Colonic mucosa (tissue), 4 donors: ENCODE measurements at regions of chr5 and their contacts with region 1.

Region 1: GRCh38 chr5:3531320-3531986 is 64.2 kb upstream of the IRX1 start:
- DNase-seq: no peak
- H3K4me3 ChIP-seq: no peak overlapping the region
- H3K27ac ChIP-seq: no peak overlapping the region
- H3K4me1 ChIP-seq: no peaks in the 10 kb centered on the region
- H3K27me3 ChIP-seq: no peaks in the 10 kb centered on the region
- CTCF ChIP-seq: no peak

Region 2: GRCh38 chr5:3010301-3010952 is 521.0 kb before region 1 on chr5:
- intact Hi-C with region 1: loop called (anchors 10 kb)
- DNase-seq: no peak
- H3K4me3 ChIP-seq: no peak overlapping the region
- H3K27ac ChIP-seq: no peak overlapping the region
- H3K4me1 ChIP-seq: no peaks in the 10 kb centered on the region
- H3K27me3 ChIP-seq: no peaks in the 10 kb centered on the region
- CTCF ChIP-seq: no peak

Region 3: GRCh38 chr5:3417376-3417943 is 114.0 kb before region 1 on chr5:
- intact Hi-C with region 1: no loop called
- DNase-seq: no peak
- H3K4me3 ChIP-seq: no peak overlapping the region
- H3K27ac ChIP-seq: no peak overlapping the region
- H3K4me1 ChIP-seq: no peaks in the 10 kb centered on the region
- H3K27me3 ChIP-seq: no peaks in the 10 kb centered on the region
- CTCF ChIP-seq: no peak